Posterior cingulate gyrus (tissue), 11 donors: ENCODE measurements at regions of chr17 and their contacts with region 1.

Region 1: DNA sequence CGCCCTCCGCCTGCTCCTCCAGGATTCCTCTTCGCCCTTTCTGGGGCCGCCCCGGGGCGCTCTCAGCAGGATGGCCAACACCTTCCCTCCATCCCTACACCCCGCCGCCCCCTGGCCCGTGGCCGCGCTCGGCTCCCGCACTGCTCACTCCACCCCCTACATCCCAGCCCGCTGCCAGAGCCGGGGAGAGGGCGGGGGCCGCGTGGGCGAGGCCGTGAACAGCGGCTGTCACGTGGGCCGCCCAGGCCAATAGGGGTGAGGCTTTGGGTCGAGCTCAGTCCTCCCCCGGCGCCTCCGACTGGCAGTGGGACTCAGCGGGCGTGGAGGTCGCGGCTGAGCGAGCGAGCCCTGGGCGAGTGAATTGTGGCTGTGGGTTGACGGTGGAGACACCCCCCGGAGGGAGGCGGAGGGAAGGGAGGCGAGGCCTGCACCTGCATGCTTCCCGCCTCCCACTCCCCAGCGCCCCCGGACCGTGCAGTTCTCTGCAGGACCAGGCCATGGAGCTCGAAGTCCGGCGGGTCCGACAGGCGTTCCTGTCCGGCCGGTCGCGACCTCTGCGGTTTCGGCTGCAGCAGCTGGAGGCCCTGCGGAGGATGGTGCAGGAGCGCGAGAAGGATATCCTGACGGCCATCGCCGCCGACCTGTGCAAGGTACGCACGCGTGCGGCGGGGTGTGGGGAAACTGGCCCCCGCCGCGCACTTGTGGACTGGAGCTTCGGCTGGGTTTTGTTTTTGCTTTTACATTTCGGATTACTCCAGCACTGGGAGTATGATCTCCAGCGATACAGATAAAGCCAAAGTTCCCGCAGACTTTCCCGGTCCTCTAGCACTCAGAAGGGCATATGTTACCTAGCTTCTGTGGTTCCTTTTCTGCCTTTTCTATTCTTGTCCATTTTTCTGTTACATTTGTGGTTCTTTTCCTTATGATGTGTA is at the start of gene ALDH3A2:
- DNase-seq: peak; percentile 97 to 100 (median 99)

Region 2: GRCh38 chr17:19362277-19363113 is 286.2 kb before region 1 on chr17 and contains the start of gene B9D1:
- intact Hi-C with region 1: loop called (anchors 10 kb)
- DNase-seq: peak; percentile 89 to 98 (median 94)

Region 3: DNA sequence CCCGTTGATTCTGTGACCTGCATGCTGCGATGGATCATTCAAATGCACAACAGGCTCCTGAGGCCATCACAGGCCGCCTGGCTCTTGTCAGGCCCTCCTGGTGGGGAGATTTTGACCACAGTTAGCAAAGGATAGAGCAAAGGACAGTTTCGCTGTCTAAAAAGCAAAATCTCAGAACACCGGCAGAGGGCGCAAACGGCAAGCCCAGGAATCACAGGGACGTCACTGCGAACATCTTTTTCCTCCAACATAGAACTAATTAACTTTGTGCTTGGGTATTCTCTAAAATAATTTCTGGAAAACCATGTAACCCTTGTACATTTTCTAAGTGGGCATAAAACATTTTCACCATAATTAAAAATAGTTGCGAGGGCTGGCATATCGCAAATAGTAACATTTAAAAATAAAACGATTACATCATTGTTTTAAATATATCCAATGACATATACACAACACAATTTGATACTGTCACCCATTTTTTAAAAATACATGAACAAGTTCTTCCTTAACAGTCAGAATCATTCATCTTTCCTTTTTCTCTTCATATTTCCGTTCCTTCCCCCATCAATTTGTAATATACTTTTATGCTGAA is 134.7 kb before region 1 on chr17:
- intact Hi-C with region 1: loop called (anchors 2 kb)
- DNase-seq: peak; percentile 47 to 94 (median 76)

Region 4: DNA sequence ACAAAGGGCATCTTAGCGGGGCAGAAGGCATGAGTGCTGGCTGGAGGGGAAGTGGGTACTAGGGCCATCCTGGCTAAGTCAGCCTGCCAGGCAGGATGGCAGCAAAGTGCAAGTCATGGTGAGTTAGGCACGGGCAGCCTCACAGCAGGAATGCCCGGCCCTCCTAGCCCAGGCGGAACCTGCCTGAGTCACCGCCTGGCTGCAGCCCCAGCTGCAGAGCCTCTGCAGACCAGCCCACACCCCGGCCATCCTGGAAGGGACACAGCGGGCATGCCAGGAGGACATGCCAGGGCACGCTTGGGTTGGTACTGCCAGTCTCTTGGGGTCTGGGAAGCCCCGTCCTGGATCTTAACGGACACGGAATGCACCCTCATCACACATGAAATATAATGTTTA is 104.3 kb after region 1 on chr17:
- intact Hi-C with region 1: loop called (anchors 5 kb)
- DNase-seq: peak in 9 of 10 donors; percentile 43 to 96 (median 78)

Region 5: GRCh38 chr17:19766422-19767270 is 117.9 kb after region 1 on chr17:
- intact Hi-C with region 1: loop called (anchors 5 kb)
- DNase-seq: peak; percentile 58 to 98 (median 88)